Caco-2 (cell line): ENCODE measurements at regions of chr11 and their contacts with region 1.

Region 1: DNA sequence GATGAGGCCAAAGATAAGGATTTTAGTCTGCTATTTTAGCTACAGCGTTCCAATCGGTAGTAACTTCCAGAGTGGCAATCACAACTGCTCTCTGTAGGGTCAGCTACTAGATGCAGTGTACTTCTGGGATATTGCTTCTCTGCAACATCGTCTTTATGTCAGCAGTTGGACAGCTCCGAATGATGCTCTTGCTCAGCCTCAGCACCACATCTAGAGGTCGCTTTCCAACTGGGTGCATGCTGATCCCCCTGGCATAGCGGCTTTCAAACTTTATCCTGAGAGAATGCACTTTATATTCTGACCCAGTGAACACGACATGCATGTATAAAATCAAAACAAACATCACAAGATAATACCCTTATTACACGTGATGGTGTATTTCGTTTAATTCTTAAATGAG is 219.6 kb downstream of the C11orf87 start:
- DNase-seq: peak; percentile 56 to 58
- H3K4me3 ChIP-seq: no peak overlapping the region
- H3K4me3 Mint-ChIP-seq: no peak overlapping the region
- H3K27ac Mint-ChIP-seq: no peak overlapping the region
- H3K4me1 ChIP-seq: no peaks in the 10 kb centered on the region
- H3K4me1 Mint-ChIP-seq: no peaks in the 10 kb centered on the region
- H3K27me3 ChIP-seq: no peaks in the 10 kb centered on the region
- H3K27me3 Mint-ChIP-seq: peaks cover 11% of the 10 kb centered on the region
- CTCF ChIP-seq: peak in 1 of 2 experiments; percentile 33

Region 2: GRCh38 chr11:109320595-109320994 is 321.0 kb before region 1 on chr11:
- CTCF ChIA-PET with region 1: no interaction called
- POLR2A ChIA-PET with region 1: no interaction called
- intact Hi-C with region 1: loop called (anchors 5 kb)
- DNase-seq: peak in 1 of 2 experiments; percentile 8
- H3K4me3 ChIP-seq: no peak overlapping the region
- H3K4me3 Mint-ChIP-seq: no peak overlapping the region
- H3K27ac Mint-ChIP-seq: no peak overlapping the region
- H3K4me1 ChIP-seq: no peaks in the 10 kb centered on the region
- H3K4me1 Mint-ChIP-seq: no peaks in the 10 kb centered on the region
- H3K27me3 ChIP-seq: no peaks in the 10 kb centered on the region
- H3K27me3 Mint-ChIP-seq: peaks cover 13% of the 10 kb centered on the region
- CTCF ChIP-seq: no peak

Region 3: GRCh38 chr11:109680127-109680526 is 38.6 kb after region 1 on chr11:
- CTCF ChIA-PET with region 1: no interaction called
- POLR2A ChIA-PET with region 1: no interaction called
- intact Hi-C with region 1: no loop called
- DNase-seq: no peak
- H3K4me3 ChIP-seq: no peak overlapping the region
- H3K4me3 Mint-ChIP-seq: no peak overlapping the region
- H3K27ac Mint-ChIP-seq: no peak overlapping the region
- H3K4me1 ChIP-seq: no peaks in the 10 kb centered on the region
- H3K4me1 Mint-ChIP-seq: no peaks in the 10 kb centered on the region
- H3K27me3 ChIP-seq: no peaks in the 10 kb centered on the region
- H3K27me3 Mint-ChIP-seq: peaks cover 4% of the 10 kb centered on the region
- CTCF ChIP-seq: no peak